T-cell (primary cell): ENCODE measurements at regions of chr3 and their contacts with region 1.

Region 1: DNA sequence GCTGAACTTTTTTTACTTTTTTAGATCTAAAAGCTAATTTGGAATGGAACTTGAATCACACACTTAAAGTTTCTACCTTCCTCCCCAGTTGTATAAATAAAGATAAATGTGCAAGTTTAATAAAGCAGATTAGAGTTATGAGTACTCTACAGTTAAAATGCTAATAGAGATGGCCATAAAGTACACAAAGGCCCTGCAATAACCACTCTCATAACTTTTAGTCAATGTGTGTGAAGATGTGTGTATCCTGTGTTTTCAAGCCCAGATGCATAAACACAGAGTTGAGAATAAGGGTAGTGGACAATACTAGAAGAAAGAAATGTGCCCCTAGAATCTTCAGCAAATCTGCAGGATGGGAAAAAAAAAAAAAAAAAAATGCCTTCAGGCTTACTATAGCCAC is 45.3 kb downstream of the TOP2B start:
- DNase-seq: no peak
- ATAC-seq: no peak
- H3K4me3 ChIP-seq: no peak overlapping the region
- H3K4me3 Mint-ChIP-seq: no peak overlapping the region
- H3K27ac ChIP-seq: no peak overlapping the region
- H3K27ac Mint-ChIP-seq: peak overlapping the region in 1 of 2 donors; percentile 50
- H3K4me1 ChIP-seq: no peaks in the 10 kb centered on the region
- H3K4me1 Mint-ChIP-seq: peaks cover 0 to 3% (median 0%) of the 10 kb centered on the region in 3 donors
- H3K27me3 ChIP-seq: no peaks in the 10 kb centered on the region
- H3K27me3 Mint-ChIP-seq: no peaks in the 10 kb centered on the region

Region 2: DNA sequence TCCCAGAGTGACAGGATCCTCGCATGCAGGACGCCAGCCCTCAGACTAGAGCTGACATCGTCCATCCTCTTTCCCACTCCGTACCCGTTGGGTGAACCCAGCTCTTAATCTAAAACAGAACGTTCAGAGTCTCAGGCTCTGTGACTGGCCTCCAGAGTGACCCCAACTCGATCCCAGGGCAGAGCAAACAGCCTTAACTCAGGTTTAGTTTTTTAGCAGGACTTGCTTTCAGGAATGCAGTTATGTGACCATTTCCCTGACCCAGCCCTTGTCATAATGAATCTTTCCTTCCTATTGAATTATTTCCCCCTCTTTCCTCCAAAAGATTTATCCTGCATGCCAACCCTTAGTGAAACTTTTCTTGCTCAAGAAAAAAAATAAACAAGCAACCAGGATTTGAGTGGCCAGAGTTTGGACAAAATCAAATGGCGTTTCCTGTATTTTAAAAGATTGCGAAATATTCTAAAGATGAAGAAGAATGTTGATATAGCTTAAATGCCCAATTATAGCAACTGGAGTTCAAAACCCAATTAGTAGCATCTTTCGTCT is 239.1 kb before region 1 on chr3:
- CTCF ChIA-PET with region 1: no interaction called
- POLR2A ChIA-PET with region 1: no interaction called
- DNase-seq: no peak
- ATAC-seq: no peak
- H3K4me3 ChIP-seq: no peak overlapping the region
- H3K4me3 Mint-ChIP-seq: no peak overlapping the region
- H3K27ac ChIP-seq: no peak overlapping the region
- H3K27ac Mint-ChIP-seq: no peak overlapping the region
- H3K4me1 ChIP-seq: no peaks in the 10 kb centered on the region
- H3K4me1 Mint-ChIP-seq: no peaks in the 10 kb centered on the region
- H3K27me3 ChIP-seq: no peaks in the 10 kb centered on the region
- H3K27me3 Mint-ChIP-seq: peaks cover 0 to 3% of the 10 kb centered on the region in 2 donors

Region 3: DNA sequence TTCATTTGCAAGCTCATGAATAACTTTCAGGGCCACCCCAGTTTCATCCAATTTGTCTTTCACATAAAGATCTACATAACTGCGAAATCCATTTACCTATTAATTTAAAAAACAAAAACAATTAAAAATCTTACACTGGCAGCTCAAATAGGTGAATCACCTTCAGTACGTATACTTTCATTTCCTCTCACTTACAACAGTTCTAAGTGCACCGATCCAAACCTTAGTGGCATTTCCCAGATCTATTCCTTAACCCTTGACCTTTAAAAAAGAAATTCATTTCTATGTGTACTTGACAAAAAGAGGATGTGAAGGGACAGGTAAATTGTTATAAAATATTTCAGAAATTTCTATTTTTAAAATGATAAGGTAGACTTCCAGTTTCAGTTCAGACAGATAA is 14.5 kb after region 1 on chr3:
- CTCF ChIA-PET with region 1: interaction called, 3 to 8 read pairs
- POLR2A ChIA-PET with region 1: interaction called in 1 of 2 experiments, 11 read pairs
- DNase-seq: no peak
- ATAC-seq: no peak
- H3K4me3 ChIP-seq: no peak overlapping the region
- H3K4me3 Mint-ChIP-seq: no peak overlapping the region
- H3K27ac ChIP-seq: no peak overlapping the region
- H3K27ac Mint-ChIP-seq: no peak overlapping the region
- H3K4me1 ChIP-seq: no peaks in the 10 kb centered on the region
- H3K4me1 Mint-ChIP-seq: peaks cover 8 to 13% (median 9%) of the 10 kb centered on the region in 3 donors
- H3K27me3 ChIP-seq: no peaks in the 10 kb centered on the region
- H3K27me3 Mint-ChIP-seq: no peaks in the 10 kb centered on the region